ENCODE measurements at regions of chr11 and their contacts with region 1.

Region 1: GRCh38 chr11:69540118-69540502 is 58.6 kb downstream of the LINC01488 start:
- DNase-seq: no peak
- H3K4me3 Mint-ChIP-seq: no peak overlapping the region
- H3K27ac Mint-ChIP-seq: no peak overlapping the region
- H3K4me1 Mint-ChIP-seq: no peaks in the 10 kb centered on the region
- H3K27me3 Mint-ChIP-seq: peaks cover 7% of the 10 kb centered on the region

Region 2: GRCh38 chr11:69443138-69443967 is 96.8 kb before region 1 on chr11:
- intact Hi-C with region 1: loop called (anchors 10 kb)
- DNase-seq: peak; percentile 92
- H3K4me3 Mint-ChIP-seq: peak overlapping the region; percentile 72
- H3K27ac Mint-ChIP-seq: peak overlapping the region; percentile 60
- H3K4me1 Mint-ChIP-seq: peaks cover 11% of the 10 kb centered on the region
- H3K27me3 Mint-ChIP-seq: peaks cover 13% of the 10 kb centered on the region

Region 3: DNA sequence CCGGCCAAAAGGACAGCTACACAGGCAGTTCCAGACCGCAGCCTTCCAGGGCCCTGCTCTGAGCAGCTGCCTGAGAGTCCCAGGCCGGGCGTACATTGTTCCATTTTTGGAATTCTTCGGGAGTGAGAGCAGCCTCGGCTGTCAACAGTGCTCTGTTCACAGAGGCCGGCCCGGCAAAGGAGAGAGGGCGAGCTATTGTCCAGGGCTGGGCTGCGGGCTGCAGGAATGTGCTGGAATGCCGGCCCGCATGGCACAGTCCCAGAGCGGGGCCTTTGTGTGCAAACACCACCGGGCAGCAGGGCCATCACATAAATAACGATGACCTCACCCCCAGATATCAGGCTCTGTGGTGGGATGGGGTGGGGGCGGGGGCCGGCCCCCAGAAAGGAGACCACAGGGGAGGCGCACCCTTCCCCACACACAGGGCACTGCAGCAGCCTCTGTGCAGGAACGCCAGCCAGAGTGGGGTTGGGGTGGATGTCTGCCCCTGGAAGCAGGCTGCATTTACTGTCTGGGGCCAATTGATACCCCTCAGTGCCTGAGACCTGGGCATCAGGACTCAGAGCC is 42.8 kb before region 1 on chr11:
- intact Hi-C with region 1: no loop called
- DNase-seq: no peak
- H3K4me3 Mint-ChIP-seq: no peak overlapping the region
- H3K27ac Mint-ChIP-seq: no peak overlapping the region
- H3K4me1 Mint-ChIP-seq: no peaks in the 10 kb centered on the region
- H3K27me3 Mint-ChIP-seq: no peaks in the 10 kb centered on the region

Region 4: GRCh38 chr11:69588270-69588669 is 48.2 kb after region 1 on chr11:
- intact Hi-C with region 1: no loop called
- DNase-seq: no peak
- H3K4me3 Mint-ChIP-seq: no peak overlapping the region
- H3K27ac Mint-ChIP-seq: no peak overlapping the region
- H3K4me1 Mint-ChIP-seq: no peaks in the 10 kb centered on the region
- H3K27me3 Mint-ChIP-seq: peaks cover 14% of the 10 kb centered on the region

Region 5: DNA sequence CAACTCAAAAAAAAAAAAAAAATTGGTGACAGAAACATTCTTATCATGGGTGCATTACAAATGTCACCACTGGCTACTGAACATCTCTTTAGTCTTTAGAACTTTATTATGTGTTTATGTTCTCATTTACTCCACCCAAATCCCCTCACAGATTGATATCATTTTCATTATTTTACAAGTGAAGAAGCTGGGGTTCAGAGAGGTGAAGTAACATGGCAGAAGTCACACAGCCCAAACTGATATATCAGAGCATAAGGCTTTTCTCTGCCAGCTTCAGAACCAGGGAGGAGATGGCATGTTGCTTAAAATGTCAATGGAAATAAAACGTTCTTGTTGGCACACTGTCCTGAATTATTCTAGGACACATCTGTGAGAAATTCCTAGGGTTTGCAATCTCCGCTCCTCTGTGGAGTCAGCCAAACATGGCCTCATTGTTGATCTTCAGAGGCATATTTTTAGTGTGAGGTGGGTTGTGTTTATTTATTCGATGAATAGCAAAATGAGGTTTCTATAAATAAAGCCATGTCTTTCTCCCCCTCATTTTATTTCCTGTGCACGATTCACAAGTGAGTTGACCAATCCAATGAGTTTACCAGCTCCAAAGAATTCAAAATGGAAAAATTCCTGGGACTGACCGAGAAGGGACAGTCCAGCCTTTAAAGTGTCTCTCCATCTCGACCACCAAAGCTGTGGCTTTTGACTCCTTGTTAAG is 465.2 kb after region 1 on chr11:
- intact Hi-C with region 1: no loop called
- DNase-seq: no peak
- H3K4me3 Mint-ChIP-seq: no peak overlapping the region
- H3K27ac Mint-ChIP-seq: no peak overlapping the region
- H3K4me1 Mint-ChIP-seq: peaks cover 6% of the 10 kb centered on the region
- H3K27me3 Mint-ChIP-seq: peaks cover 4% of the 10 kb centered on the region